ENCODE measurements at regions of chr5 and their contacts with region 1.

Region 1: DNA sequence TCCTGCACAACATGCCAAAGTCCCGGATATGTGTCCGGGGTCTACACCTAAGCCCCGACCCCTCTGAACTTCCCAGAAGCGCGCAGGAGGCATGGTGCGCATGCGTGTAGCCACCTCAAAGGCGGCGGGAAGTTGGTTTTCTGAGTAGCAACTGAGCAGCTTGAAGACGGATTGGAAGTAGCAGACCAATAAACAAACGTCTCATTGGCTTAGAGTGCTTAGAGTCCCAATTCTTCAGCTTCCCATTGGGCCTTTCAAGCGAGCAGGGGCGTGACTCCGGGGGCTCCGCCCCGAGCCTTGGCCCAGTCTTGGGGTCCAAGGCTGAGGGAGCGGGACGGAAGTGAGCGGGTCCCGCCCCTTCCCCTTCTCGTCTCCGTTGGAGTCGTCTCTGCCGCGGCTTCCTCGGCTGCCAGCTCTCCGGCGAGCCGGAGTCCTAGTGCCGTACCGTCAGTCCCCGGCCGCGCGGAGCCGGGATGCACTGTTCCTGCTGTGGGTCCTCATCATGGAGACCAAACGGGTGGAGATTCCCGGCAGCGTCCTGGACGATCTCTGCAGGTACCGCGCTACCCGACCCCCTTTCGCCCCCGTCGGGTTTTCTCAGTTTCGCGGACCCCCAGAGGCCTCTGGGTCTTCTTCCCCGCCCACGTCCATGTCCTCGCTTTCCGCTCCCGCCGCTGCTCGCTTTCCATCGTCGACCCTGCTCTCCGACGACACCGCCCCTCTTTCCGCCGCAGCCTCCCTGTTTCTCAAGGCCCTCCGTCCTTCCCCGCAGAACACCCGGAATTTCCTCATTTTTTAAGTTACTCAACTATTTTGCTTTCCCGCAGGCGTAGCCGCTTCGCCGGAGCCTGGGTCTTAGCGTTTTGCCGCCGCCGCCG is at the start of gene DCP2:
- DNase-seq: peak; percentile 88 to 98 (median 94)

Region 2: GRCh38 chr5:112833971-112834370 is 142.7 kb before region 1 on chr5:
- intact Hi-C with region 1: no loop called
- DNase-seq: no peak

Region 3: DNA sequence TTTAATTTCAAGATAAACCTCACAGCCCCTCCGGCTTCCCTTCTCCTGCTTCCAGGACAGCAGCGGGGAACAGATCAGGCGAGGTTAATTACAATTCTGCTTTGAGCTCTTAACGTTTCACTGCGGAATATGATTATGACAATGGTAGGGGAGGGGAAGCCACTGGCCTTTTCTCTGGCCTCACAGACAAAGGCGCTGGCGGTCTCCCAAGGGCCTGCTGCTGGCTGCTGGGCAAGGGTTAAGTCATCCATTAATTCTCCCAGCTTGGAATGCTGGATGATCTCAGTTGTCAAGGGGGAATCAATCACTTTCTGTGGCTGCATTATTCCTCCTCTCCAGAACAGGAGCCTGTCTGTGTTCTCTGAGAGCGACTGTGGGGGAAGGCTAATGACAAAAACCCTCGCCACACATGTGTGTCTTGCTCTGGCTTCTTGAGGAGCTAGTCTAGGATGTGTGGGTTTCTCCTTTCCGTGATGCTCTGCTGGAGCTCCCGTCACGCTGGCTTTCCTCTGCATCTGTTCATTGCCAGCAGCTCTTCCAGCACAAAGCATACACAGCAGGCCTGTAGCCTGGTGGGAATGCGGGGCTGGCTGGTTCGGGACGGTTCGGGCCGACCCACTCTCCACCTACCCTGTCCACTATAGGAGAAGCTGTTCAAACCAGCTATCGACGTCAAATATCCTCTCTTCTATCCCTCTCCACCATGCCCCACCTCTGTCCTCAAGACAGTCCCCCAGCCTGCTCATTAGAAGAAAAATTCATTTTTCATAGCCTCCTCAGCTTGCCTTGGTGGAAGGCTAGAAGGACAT is 82.8 kb after region 1 on chr5:
- intact Hi-C with region 1: no loop called
- DNase-seq: peak in 37 of 42 donors; percentile 20 to 84 (median 51)

Region 4: DNA sequence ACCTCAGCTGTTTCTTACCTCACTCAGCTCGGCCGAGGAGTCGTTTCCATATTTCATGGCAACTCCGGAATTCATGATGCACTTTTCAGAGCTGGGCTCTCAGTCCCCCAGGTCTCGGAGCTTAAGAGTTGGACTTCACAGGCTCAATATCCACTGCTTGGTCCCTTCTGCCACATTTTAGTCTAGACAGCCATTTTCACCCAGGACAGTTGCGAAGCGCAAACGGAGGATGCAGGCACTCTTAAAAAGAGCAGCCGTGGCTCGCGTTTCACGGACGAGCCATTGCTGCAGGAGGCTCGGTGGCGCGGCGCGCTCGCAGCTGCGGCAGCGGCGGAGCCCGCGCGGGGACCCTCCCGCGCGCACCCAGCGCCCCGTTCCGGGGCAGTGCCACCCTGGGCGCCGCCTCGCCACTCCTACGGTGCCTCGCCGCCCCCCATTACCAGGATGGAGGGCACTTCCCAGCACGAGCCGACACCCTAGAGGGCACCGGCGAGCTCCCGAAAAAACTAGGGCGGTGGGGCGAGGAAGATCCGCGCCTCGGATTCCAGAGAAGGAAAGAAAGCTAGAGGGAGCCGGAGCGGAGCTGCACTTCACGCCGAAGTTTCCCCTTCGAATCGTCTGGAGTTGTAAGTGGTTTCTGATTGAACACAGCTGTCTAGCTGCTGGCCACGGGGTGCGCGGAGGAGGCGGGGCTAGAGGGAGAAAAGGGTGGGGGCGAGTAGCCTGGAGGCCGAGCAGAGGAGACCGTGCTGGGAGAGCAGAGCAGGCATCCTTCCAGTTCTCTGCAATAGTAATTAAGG is 317.8 kb after region 1 on chr5:
- intact Hi-C with region 1: no loop called
- DNase-seq: peak; percentile 56 to 86 (median 76)

Region 5: GRCh38 chr5:113513384-113514288 is 537.0 kb after region 1 on chr5 and contains the start of gene YTHDC2:
- intact Hi-C with region 1: loop called (anchors 5 kb)
- DNase-seq: peak; percentile 61 to 92 (median 85)

Measured in head of caudate nucleus (tissue), 42 donors.